ENCODE measurements at regions of chr16 and their contacts with region 1.

Region 1: DNA sequence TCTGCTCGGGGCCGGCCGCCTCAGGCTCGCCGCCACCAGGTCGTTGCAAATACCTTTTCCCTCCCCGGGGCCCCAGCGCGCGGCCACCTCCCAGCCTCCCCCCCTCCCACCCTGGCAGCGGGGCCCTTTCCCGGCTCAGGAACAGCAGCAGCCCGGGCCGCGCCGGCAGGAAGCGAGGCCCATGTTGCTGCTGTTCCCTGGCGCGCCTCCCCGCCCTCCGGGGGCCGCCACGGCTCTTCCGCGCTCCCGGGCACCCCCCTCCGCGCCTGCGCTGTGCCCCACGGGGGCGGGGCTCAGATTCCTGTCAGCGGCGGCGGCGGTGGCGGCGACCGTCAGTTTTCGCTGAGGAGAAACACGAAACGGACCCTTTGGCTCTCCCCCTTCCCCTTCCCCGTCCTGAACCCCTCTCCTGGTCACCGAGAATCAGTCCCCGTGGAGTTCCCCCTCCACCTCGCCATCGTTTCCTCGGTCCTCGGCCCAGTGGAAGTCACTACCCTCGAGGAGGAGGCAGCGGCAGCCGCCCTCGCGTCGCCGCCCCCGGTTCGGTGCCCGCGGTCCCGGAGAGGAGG is at the start of gene NFAT5:
- DNase-seq: peak; percentile 100
- ATAC-seq: peak; percentile 67
- H3K4me3 Mint-ChIP-seq: peak within 1 kb of the TSS; percentile 99
- H3K27ac Mint-ChIP-seq: peak within 1 kb of the TSS; percentile 99
- H3K4me1 Mint-ChIP-seq: peaks cover 60% of the 10 kb centered on the region
- H3K27me3 Mint-ChIP-seq: no peaks in the 10 kb centered on the region
- CTCF ChIP-seq: no peak
- total RNA-seq, gene NFAT5: 39.9 and 48.3 TPM in 2 replicates

Region 2: DNA sequence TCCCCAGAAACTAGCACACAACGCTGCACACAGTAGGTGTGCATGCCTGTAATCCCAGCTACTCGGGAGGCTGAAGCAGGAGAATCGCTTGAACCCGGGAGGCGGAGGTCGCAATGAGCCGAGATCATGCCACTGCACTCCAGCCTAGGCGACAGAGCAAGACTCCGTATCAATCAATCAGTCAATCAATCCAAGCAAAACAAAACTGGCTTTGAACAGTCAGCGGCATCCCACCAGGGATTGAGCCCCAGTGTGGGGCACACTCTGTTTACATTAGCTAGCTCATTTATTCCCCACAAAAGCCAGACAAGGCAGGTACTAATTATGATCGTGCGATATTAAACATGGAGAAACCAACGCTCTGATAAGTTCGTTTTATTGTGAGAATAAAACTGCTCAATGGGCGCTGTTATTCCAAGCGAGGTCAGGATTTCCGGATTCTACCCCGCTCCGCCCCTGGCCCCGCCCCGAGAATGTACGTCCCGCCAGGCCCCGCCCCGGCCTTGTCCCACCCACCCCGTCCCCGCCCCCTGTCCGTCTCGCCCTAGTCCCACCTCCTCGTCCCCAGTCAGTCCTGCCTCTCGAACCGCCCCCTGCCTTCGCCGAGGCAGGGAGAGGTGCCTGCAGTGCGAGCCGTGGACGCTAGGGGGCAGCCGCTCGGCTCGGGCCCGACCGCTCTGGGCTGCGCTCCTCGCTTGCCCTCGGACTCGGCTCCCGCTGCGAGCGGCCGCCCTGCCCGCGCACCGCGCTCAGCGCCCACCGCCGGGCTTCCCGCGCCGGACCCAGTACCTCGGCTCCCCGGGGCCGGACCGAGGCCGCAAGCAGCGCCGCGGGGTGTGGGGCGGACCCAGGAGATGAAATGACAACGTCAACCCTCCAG is 254.9 kb before region 1 on chr16 and contains the start of gene VPS4A:
- CTCF ChIA-PET with region 1: no interaction called
- POLR2A ChIA-PET with region 1: no interaction called
- intact Hi-C with region 1: loop called (anchors 2 kb)
- DNase-seq: peak; percentile 99
- ATAC-seq: peak; percentile 98
- H3K4me3 Mint-ChIP-seq: peak within 1 kb of the TSS; percentile 98
- H3K27ac Mint-ChIP-seq: peak within 1 kb of the TSS; percentile 91
- H3K4me1 Mint-ChIP-seq: peaks cover 27% of the 10 kb centered on the region
- H3K27me3 Mint-ChIP-seq: no peaks in the 10 kb centered on the region
- CTCF ChIP-seq: no peak
- total RNA-seq, gene VPS4A: 34.2 and 41.7 TPM in 2 replicates

Region 3: GRCh38 chr16:69396187-69397061 is 169.3 kb before region 1 on chr16:
- CTCF ChIA-PET with region 1: interaction called, 22 read pairs
- POLR2A ChIA-PET with region 1: interaction called, 10 read pairs
- intact Hi-C with region 1: loop called (anchors 1 kb)
- DNase-seq: no peak
- ATAC-seq: peak; percentile 56
- H3K4me3 Mint-ChIP-seq: no peak overlapping the region
- H3K27ac Mint-ChIP-seq: no peak overlapping the region
- H3K4me1 Mint-ChIP-seq: peaks cover 10% of the 10 kb centered on the region
- H3K27me3 Mint-ChIP-seq: no peaks in the 10 kb centered on the region
- CTCF ChIP-seq: no peak

Region 4: DNA sequence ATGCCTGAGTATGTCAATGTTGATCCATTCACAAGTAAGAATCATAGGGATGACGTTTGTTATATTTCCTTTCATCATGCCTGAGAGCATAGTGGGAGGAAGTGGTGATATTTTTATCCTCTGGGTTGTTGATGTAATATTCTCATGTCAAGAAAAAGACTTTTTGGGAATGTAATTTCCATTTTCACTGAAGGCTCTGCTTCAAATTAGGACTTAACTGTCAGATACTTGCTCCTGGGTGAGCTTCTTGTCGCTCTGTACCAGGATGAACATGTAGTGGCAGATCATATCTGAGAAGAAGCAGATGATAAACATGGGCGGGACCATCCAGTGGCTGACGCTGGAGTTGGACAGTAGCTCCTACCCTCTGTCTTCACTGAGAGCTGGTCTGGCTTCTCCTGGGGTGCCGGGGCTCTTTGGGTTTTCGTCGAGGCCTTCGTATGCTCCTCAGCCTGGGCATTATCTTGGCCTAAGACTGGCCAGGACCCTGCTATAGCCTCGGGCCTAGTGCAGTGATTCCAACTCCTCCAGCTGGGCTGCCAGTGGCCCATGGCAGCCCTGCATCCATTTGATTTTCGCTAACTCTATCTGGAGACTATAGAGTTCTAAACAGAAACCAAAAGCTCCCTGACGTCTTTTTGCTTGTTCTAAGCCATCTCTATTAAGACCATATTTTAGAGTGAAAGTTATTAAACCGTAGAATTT is 121.7 kb before region 1 on chr16:
- CTCF ChIA-PET with region 1: interaction called, 4 read pairs
- POLR2A ChIA-PET with region 1: interaction called, 3 read pairs
- intact Hi-C with region 1: loop called (anchors 2 kb)
- DNase-seq: no peak
- ATAC-seq: peak; percentile 56
- H3K4me3 Mint-ChIP-seq: peak overlapping the region; percentile 72
- H3K27ac Mint-ChIP-seq: peak overlapping the region; percentile 82
- H3K4me1 Mint-ChIP-seq: peaks cover 40% of the 10 kb centered on the region
- H3K27me3 Mint-ChIP-seq: no peaks in the 10 kb centered on the region
- CTCF ChIP-seq: no peak

Region 5: GRCh38 chr16:69535123-69536050 is 30.4 kb before region 1 on chr16:
- CTCF ChIA-PET with region 1: no interaction called
- POLR2A ChIA-PET with region 1: interaction called, 12 read pairs
- intact Hi-C with region 1: loop called (anchors 1 kb)
- DNase-seq: no peak
- ATAC-seq: no peak
- H3K4me3 Mint-ChIP-seq: no peak overlapping the region
- H3K27ac Mint-ChIP-seq: no peak overlapping the region
- H3K4me1 Mint-ChIP-seq: peaks cover 26% of the 10 kb centered on the region
- H3K27me3 Mint-ChIP-seq: no peaks in the 10 kb centered on the region
- CTCF ChIP-seq: no peak

Region 6: DNA sequence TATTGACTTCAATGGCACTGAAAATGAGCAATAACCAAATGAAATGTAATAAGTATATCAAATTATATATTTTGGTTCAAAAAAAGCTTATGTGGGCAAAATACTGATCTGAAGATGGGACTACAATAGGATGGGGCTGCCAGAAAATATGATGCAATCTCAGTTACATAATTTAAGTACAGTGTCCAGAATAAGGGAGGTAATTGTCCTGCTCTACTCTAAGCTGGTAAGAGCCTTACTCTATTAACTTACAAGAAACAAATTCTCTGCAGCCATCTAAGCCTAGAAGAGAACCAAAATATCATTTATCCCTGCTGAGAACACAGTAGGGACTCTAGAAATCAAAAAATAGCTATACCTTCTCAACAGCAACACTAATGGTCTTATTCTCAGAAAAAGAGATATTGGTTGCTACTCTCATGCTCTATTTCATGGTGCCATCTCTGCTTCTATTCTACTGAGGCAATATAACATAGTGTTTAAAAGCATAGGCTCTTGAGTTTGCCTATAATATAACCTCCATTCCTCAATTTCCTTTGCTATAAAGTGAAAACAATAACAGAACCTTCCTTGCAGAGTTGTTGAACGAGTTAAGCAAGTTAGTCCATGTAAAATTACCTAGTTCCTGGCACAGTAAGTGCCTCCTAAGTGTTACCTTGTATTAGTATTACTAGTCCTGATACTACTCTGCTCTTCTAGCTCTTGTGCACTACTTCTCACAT is 140.7 kb after region 1 on chr16:
- CTCF ChIA-PET with region 1: no interaction called
- POLR2A ChIA-PET with region 1: no interaction called
- intact Hi-C with region 1: no loop called
- DNase-seq: no peak
- ATAC-seq: no peak
- H3K4me3 Mint-ChIP-seq: no peak overlapping the region
- H3K27ac Mint-ChIP-seq: peak overlapping the region; percentile 12
- H3K4me1 Mint-ChIP-seq: no peaks in the 10 kb centered on the region
- H3K27me3 Mint-ChIP-seq: no peaks in the 10 kb centered on the region
- CTCF ChIP-seq: no peak

Region 7: DNA sequence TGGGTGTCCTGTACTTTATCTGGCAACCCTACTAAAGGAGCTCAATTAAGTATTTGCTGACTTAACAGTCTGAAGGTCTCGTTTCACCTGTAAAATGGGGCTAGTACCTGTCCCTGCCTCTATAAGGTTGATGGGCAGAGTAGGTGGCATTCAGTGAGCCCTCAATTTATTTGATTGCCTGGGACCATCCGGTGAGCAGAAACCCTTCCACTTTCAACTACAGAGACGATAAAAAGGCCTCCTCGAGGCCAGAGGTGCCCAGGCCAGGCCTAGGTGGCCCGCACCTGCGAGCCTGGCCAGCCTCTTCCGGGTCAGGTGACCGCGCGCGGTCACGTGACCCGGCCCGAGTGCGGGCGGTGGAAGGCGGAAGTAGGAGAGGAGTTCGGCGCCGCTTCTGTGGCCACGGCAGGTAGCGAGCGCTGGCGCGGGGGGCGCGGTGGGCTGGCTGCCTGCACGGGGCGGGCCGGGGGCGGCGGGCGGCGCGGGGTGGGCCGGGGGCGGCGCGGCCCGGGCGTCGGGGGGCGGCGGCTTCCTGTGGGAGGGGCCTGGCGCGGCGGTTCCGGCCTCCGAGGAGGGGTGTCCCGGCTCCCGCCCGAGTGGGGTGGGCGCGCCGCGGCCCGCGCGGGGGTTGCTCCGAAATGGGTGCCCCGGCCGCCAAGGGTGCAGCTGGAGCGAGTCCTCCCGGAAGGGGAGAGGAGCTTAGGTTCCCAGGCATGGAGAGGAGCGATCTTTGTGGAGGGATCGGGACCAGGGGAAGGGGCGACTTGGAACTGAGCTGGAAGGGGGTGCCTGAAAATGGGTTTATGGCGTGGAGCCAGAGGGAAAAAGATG is 196.4 kb after region 1 on chr16 and contains the start of gene WWP2:
- CTCF ChIA-PET with region 1: no interaction called
- POLR2A ChIA-PET with region 1: no interaction called
- intact Hi-C with region 1: loop called (anchors 5 kb)
- DNase-seq: peak; percentile 73
- ATAC-seq: peak; percentile 86
- H3K4me3 Mint-ChIP-seq: peak within 1 kb of the TSS; percentile 90
- H3K27ac Mint-ChIP-seq: peak within 1 kb of the TSS; percentile 96
- H3K4me1 Mint-ChIP-seq: peaks cover 36% of the 10 kb centered on the region
- H3K27me3 Mint-ChIP-seq: no peaks in the 10 kb centered on the region
- CTCF ChIP-seq: no peak
- total RNA-seq, gene WWP2: 69.4 and 80.8 TPM in 2 replicates

Region 8: GRCh38 chr16:69917739-69918138 is 352.0 kb after region 1 on chr16:
- CTCF ChIA-PET with region 1: no interaction called
- POLR2A ChIA-PET with region 1: no interaction called
- intact Hi-C with region 1: no loop called
- DNase-seq: no peak
- ATAC-seq: no peak
- H3K4me3 Mint-ChIP-seq: no peak overlapping the region
- H3K27ac Mint-ChIP-seq: no peak overlapping the region
- H3K4me1 Mint-ChIP-seq: no peaks in the 10 kb centered on the region
- H3K27me3 Mint-ChIP-seq: no peaks in the 10 kb centered on the region
- CTCF ChIP-seq: no peak

Measured in activated B cell treated with CpG ODN at 0.5 μM for 24 hours (primary cell).